Heart left ventricle (tissue), 16 donors: ENCODE measurements at regions of chr20 and their contacts with region 1.

Region 1: GRCh38 chr20:34190679-34191090 is 50.5 kb upstream of the ASIP start:
- DNase-seq: peak; percentile 52 to 74 (median 65)
- ATAC-seq: peak; percentile 91 to 96 (median 94)
- H3K4me3 ChIP-seq: no peak overlapping the region
- H3K27ac ChIP-seq: no peak overlapping the region
- H3K4me1 ChIP-seq: peaks cover 0 to 5% (median 0%) of the 10 kb centered on the region in 12 donors
- H3K27me3 ChIP-seq: peaks cover 0 to 5% (median 0%) of the 10 kb centered on the region in 9 donors
- CTCF ChIP-seq: peak; percentile 49 to 82 (median 64)
- POLR2A ChIP-seq: no peak

Region 2: DNA sequence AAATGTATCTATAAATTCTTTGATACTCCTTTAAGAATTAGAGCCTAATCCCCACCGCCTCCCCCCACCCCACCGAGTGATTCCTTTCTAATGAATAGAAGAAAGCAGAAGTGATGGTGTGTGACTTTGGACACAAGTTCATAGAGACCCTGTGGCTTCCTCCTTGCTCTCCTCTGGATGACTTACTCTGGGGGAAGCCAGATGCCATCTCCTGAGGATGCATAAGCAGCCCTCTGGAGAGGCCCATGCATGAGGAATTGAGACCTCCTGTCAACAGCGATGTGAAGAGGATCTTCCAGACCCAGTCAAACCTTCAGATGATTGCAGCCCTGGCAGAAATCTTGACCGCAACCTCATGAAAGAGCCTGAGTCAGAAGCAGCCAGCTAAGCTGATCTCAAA is 91.4 kb after region 1 on chr20:
- intact Hi-C with region 1: no loop called
- DNase-seq: no peak
- ATAC-seq: no peak
- H3K4me3 ChIP-seq: no peak overlapping the region
- H3K27ac ChIP-seq: no peak overlapping the region
- H3K4me1 ChIP-seq: no peaks in the 10 kb centered on the region
- H3K27me3 ChIP-seq: no peaks in the 10 kb centered on the region
- CTCF ChIP-seq: no peak
- POLR2A ChIP-seq: no peak

Region 3: DNA sequence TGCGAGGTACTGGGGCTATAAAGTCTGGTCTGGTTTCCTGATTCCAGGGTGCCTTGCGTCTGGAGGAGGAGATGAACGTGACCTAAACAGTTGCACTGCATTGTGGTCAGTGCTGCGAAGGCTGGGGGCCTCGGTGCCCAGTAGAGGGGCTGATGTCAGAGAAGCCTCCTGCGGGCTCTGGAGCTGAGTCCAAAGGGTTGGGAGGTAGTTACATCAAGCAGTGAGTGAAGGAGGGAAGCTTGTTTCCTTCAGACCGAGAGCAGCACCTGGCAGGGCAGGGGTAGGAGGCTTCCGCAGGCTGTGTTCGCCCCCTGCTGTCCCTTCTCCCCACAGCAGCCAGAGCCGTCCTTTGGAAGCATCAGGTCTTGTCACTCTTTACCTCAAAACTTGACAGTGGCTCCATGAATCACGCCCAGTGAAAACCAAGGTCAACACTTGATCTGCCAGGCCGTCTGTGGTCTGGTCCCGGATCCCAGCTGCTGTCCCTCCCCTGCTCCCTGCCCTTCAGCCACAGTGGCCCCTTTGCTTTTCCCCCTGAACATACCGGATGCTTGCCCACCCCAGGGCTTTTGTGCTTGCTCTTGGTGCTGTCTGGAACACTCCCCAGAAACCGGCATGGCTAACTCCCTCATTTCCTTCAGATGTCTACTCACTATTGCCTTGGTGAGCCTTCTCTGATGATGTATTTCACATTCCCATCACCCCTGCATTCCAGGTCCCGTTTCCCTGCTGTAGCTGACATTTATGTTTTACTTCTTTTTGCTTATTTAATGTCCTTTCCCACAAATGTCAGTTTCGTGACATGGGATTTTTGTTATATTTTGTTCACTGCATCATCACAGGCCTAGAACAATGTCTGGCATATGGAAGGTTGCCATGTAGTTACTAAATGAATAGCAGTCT is 332.5 kb after region 1 on chr20:
- intact Hi-C with region 1: loop called in 1 of 10 experiments (anchors 10 kb)
- DNase-seq: no peak
- ATAC-seq: peak in 3 of 4 donors; percentile 26 to 48 (median 41)
- H3K4me3 ChIP-seq: no peak overlapping the region
- H3K27ac ChIP-seq: peak overlapping the region in 7 of 12 donors; percentile 22 to 62 (median 39)
- H3K4me1 ChIP-seq: peaks cover 4 to 65% (median 50%) of the 10 kb centered on the region in 12 donors
- H3K27me3 ChIP-seq: no peaks in the 10 kb centered on the region
- CTCF ChIP-seq: peak; percentile 14 to 60 (median 42)
- POLR2A ChIP-seq: no peak